Colonic mucosa (tissue), 4 donors: ENCODE measurements at regions of chr21 and their contacts with region 1.

Region 1: DNA sequence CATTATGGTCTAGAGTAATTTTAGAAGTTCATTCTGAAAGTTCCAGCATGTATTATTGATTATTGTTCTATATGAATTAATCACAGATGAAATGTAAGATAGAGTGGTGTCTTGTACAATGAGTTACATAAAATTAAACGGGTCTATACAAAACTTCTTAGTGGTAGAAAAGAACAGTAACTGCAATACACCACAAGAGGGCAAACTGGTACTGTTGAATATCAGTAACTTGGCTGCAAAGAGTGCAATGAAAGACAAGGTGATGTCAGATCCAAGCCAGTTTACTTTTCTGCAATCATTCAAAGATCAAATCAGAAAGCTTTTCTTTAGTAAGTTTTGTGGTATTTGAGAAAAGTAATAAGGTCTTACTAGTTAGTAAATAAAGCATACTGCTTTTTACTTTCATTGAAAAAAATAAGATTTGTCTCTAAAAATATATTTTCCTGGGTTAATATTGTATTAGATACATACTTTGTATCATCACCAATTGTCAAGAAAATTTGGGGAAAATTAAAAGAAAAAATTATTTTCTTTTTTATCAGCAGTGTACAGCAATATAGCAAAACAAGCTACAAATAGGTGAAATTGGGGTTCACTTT is 66.4 kb upstream of the BTG3 start:
- DNase-seq: no peak
- H3K4me3 ChIP-seq: no peak overlapping the region
- H3K27ac ChIP-seq: no peak overlapping the region
- H3K4me1 ChIP-seq: no peaks in the 10 kb centered on the region
- H3K27me3 ChIP-seq: no peaks in the 10 kb centered on the region
- CTCF ChIP-seq: peak; percentile 70

Region 2: GRCh38 chr21:17903029-17903806 is 224.1 kb after region 1 on chr21:
- intact Hi-C with region 1: loop called (anchors 5 kb)
- DNase-seq: no peak
- H3K4me3 ChIP-seq: no peak overlapping the region
- H3K27ac ChIP-seq: no peak overlapping the region
- H3K4me1 ChIP-seq: no peaks in the 10 kb centered on the region
- H3K27me3 ChIP-seq: no peaks in the 10 kb centered on the region
- CTCF ChIP-seq: no peak

Region 3: GRCh38 chr21:17921579-17922530 is 242.8 kb after region 1 on chr21:
- intact Hi-C with region 1: loop called (anchors 2 kb)
- DNase-seq: no peak
- H3K4me3 ChIP-seq: no peak overlapping the region
- H3K27ac ChIP-seq: no peak overlapping the region
- H3K4me1 ChIP-seq: no peaks in the 10 kb centered on the region
- H3K27me3 ChIP-seq: no peaks in the 10 kb centered on the region
- CTCF ChIP-seq: no peak